Spleen (tissue), 13 donors: ENCODE measurements at regions of chr17 and their contacts with region 1.

Region 1: DNA sequence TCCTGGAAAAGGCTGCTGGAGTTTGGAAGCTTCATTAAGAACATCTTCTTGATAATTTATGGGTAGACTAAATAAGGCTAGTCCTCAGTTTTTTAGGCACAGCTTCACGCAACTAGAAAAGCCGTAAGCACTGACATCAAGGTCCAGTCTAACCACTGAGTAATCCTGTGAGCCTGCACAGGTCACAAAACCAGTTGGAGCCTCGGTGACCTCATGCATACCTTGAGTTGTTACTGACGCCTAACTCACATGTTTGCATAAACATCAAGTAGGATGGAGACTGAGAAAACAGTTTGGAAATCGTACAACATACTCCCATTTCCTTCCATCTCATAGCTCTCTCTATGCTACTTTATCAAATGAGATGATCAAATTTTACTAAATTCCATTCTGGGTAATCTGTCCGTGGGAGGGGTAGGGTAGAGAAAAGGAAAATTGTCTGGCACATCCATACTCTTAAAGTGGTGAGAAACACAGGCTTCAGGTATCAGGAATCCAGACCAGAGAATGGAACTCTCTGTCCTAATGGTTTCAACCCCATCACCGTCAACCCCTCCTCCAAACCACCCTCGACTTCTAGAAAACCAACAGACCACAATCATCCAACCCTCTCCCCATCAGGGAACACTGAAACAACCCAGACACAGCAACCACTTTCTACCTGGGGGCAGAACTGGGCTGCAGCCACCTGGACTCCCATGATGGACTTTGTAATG is 64.0 kb upstream of the RCVRN start:
- DNase-seq: peak; percentile 4
- H3K4me3 ChIP-seq: no peak overlapping the region
- H3K27ac ChIP-seq: no peak overlapping the region
- H3K4me1 ChIP-seq: peaks cover 0 to 40% (median 13%) of the 10 kb centered on the region in 6 donors
- H3K27me3 ChIP-seq: no peaks in the 10 kb centered on the region
- CTCF ChIP-seq: no peak
- POLR2A ChIP-seq: no peak

Region 2: DNA sequence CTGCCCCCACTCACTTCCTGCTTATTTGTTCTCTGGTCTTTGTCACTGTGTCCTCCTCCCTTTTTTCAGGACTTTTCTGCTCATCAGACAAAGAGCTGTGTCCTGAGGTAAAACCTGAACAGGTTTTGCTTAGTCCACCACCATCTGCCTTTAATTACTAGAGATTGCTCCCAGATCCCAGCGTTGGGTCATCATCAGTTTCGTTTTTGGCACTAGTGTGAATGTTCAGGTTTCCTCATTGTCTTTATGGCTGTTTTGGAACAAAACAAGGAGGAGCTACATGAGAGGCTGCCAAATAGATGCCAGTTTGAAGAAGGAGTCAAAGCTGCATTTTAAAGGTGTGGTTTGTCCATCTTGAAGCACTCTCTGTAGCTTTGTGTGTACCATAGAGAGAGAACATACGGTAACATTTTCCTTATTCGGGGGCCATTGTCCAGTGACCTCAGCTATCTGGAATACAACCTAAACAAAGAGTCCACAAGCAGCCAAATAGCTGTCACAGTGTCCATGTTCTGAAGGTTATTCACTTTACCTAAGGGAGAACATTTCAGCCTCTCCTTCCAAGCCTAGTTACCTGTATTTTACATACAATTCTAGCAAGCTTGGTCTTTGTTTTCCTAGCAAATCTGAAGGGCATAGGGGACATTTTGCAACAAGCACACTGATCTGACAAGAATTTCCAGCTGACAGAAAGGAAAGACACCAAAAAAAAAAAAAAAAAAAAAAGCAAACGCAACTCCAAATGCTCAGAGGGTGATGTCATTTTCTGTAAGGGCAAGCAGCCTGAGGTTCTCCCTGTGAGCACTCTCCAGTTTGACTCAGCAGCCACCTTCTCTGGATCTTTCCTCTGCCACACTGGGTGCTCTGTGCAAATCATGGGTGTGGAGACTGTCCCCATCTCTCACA is 751.7 kb before region 1 on chr17:
- intact Hi-C with region 1: no loop called
- DNase-seq: no peak
- H3K4me3 ChIP-seq: no peak overlapping the region
- H3K27ac ChIP-seq: no peak overlapping the region
- H3K4me1 ChIP-seq: no peaks in the 10 kb centered on the region
- H3K27me3 ChIP-seq: peaks cover 0 to 4% (median 0%) of the 10 kb centered on the region in 7 donors
- CTCF ChIP-seq: no peak
- POLR2A ChIP-seq: no peak

Region 3: GRCh38 chr17:10226930-10227685 is 258.0 kb after region 1 on chr17:
- intact Hi-C with region 1: loop called (anchors 10 kb)
- DNase-seq: peak; percentile 87
- H3K4me3 ChIP-seq: no peak overlapping the region
- H3K27ac ChIP-seq: no peak overlapping the region
- H3K4me1 ChIP-seq: peaks cover 0 to 9% (median 2%) of the 10 kb centered on the region in 6 donors
- H3K27me3 ChIP-seq: no peaks in the 10 kb centered on the region
- CTCF ChIP-seq: peak; percentile 47 to 91 (median 78)
- POLR2A ChIP-seq: no peak